A549 (cell line): ENCODE measurements at regions of chr19 and their contacts with region 1.

Region 1: DNA sequence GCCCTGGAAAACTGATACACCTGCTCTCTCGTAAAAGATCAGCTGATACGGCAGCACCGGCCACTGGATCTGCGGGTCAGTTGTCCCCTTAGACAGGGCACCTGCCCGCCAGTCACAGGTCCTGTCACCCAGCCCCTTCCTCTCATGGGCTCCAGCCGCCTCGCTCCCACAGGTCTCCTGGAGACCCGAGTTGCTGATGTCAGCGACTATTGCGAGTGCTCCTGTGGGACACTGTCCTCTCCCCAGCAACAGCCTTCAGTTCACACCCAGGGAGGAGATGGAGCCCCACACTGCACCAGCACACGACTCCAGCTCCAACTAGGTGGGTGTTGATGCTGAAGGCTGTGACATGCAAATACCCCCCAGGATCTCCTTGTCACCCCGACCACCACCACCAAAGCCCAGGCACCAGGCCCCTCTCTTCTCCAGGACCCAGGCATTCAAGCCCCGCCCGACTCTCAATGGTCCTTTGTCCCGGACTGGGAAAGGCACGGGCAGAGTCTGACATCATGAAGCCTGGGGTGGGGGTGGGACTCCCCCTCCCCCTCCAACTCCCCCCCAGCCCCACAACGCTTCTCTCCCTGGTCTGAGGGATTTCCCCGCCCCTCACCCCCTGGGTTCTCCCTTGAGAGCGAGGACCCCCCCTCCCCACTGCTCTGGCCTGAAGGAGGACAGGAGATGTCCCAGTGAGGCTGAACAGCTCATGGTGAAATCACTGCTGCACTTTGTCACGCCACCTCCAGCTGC is 1.4 kb upstream of the MAG start:
- DNase-seq: no peak
- ATAC-seq: 0 out of 6 replicates have a peak, but pooled peaks of 1 of the 2 experiments have one; percentile 8
- H3K4me3 ChIP-seq: no peak overlapping the region
- H3K27ac ChIP-seq: no peak overlapping the region
- H3K4me1 ChIP-seq: no peaks in the 10 kb centered on the region
- CTCF ChIP-seq: no peak
- EP300 ChIP-seq: no peak
- POLR2A ChIP-seq: no peak
- RAD21 ChIP-seq: no peak

Region 2: GRCh38 chr19:35279985-35280821 is 10.4 kb before region 1 on chr19:
- CTCF ChIA-PET with region 1: interaction called, 25 read pairs
- POLR2A ChIA-PET with region 1: interaction called, 3 read pairs
- DNase-seq: no peak
- ATAC-seq: peak in 1 of 2 experiments; percentile 4; a peak in 2 of 6 replicates
- H3K4me3 ChIP-seq: no peak overlapping the region
- H3K27ac ChIP-seq: no peak overlapping the region
- H3K4me1 ChIP-seq: no peaks in the 10 kb centered on the region
- CTCF ChIP-seq: no peak
- EP300 ChIP-seq: no peak
- POLR2A ChIP-seq: 0 out of 2 replicates have a peak, but pooled peaks have one; percentile 1
- RAD21 ChIP-seq: no peak